ENCODE measurements at regions of chr22 and their contacts with region 1.

Region 1: DNA sequence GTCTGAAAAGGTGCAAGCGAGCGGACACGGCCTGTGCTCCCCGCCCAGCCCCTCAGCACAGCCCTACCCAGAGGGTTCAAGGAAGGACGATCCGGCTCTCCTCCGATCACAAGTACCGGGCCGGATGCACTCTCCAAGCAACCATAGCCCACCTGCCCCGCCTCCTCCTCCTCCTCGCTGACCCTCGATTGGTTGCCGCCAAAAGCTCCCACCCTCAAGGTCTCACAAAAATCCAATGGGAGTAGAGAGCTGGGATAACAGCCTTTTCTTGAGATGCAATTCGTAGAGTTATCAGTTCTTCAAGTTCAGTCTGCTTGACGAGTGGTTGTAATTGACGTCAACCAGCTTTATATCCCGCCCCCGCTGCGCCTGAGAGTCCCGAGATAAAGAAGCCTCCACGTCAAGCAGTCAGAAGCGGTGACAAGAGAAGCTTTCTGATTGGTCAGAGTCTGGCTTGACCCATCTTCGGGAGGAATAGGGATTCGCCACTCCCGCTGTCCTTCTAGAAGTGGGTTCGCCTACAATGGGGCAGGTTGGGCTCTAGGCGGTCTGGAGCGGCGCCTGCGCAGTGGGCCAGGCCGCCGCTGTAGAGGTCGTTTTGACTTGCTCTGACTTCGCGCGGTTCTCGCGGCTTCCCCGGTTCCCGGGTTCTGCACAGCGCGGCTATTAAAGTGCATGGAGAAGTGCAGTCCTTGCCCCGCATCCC is at the start of gene IFT27:
- DNase-seq: peak; percentile 100
- total RNA-seq, gene IFT27: 30.3 and 34.5 TPM in 2 replicates

Region 2: DNA sequence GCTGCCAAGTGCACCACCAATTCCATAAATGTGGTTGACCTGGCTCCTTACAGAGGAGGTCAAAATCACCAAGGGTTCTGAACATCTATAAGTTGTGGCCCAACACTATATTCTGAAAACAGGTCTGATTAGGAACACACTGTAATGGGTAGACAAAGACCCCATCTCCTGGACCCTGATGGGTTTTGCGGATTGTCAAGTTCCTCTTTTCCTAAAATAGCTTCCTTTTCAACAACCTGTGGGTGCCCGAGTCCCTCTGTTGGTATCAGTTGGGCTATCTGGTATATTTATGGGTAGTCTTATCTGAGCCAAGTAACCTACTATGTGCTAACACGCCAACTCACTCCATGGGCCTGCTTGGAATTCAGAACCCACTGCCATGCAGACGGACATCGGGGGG is 62.7 kb before region 1 on chr22:
- in situ Hi-C with region 1: no loop called
- DNase-seq: no peak

Region 3: GRCh38 chr22:36839356-36840073 is 63.4 kb after region 1 on chr22:
- in situ Hi-C with region 1: loop called (anchors 5 kb)
- DNase-seq: no peak

Region 4: GRCh38 chr22:36891646-36892045 is 115.5 kb after region 1 on chr22:
- in situ Hi-C with region 1: no loop called
- DNase-seq: no peak